Panc1 (cell line): ENCODE measurements at regions of chr22 and their contacts with region 1.

Region 1: DNA sequence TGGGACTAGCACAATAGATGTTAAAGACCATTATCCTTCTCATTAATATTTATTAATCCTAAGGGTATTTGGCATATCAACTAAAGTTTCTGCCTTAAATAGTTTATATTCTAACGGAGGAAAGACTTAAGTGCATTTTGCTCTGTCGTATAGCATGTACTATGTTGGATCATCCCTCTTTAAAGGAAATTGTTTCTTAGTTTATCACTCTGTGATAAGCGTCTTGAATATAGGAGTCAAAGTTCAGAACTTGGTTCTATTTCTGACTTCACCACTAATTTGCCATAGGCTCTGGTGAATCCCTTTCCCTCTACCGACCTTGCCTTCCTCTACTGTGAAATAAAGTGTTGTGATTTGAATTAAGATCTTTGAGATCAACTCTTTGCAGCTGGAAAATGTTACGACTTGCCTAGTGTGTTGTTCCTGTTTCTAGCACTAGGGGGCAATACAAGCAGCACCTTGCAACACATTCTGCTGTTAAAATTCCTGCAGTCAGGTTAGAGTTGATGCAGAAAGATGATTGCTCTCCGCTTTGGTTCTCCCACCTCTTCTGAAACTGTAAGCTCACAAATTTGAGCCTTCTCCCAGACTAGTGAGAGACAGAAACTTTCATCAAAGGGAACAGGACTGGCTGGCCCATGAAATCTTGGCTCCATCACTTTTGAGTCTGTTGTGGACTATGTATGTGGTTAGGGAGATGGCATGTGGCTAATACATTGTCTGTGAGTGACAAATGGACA is 27.8 kb upstream of the ZNRF3 start:
- DNase-seq: peak; percentile 69
- ATAC-seq: peak; percentile 84
- H3K4me3 ChIP-seq: no peak overlapping the region
- H3K27ac ChIP-seq: no peak overlapping the region
- H3K4me1 ChIP-seq: no peaks in the 10 kb centered on the region
- H3K27me3 ChIP-seq: no peaks in the 10 kb centered on the region
- CTCF ChIP-seq: peak; percentile 84

Region 2: GRCh38 chr22:28885939-28886338 is 30.4 kb after region 1 on chr22:
- CTCF ChIA-PET with region 1: interaction called, 16 read pairs
- POLR2A ChIA-PET with region 1: no interaction called
- in situ Hi-C with region 1: no loop called
- intact Hi-C with region 1: no loop called
- DNase-seq: no peak
- ATAC-seq: no peak
- H3K4me3 ChIP-seq: no peak overlapping the region
- H3K27ac ChIP-seq: no peak overlapping the region
- H3K4me1 ChIP-seq: peaks cover 14% of the 10 kb centered on the region
- H3K27me3 ChIP-seq: no peaks in the 10 kb centered on the region
- CTCF ChIP-seq: no peak

Region 3: DNA sequence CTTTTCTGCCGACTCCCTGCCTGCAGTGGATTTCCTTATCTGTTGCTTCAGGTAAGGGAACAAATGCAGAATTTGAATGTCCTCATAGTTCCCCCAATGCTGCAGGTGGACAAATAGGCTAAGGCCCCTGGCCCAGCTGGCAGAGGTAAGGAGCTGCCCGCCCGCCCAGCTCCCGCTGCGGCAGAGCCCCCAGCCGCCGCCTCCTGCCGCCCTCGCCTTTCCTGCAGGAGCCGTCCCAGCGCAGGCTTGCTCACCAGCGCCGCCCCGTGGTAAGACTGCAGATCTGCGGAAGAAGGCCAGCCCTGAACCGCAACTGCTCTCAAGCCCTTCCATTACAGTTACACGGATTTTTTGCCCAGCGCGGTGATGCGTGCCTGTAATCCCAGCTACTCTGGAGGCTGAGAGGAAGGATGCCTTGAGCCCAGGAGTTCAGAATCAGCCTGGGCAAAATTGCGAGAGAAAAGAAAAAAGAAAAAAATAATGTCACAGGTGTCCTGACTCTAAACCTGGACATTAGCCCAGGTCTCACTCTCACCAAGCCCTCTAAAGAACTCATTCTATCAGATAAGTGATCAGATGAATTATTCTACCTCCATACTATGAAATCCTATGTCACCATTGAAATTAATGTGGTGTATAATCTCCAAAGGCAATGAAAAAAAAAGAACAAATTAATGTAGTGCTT is 299.0 kb after region 1 on chr22:
- CTCF ChIA-PET with region 1: no interaction called
- POLR2A ChIA-PET with region 1: no interaction called
- in situ Hi-C with region 1: no loop called
- intact Hi-C with region 1: no loop called
- DNase-seq: peak; percentile 5
- ATAC-seq: peak; percentile 89
- H3K4me3 ChIP-seq: no peak overlapping the region
- H3K27ac ChIP-seq: no peak overlapping the region
- H3K4me1 ChIP-seq: peaks cover 3% of the 10 kb centered on the region; the same call in 1 of the 2 replicates
- H3K27me3 ChIP-seq: no peaks in the 10 kb centered on the region
- CTCF ChIP-seq: peak; percentile 96